ENCODE measurements at regions of chr5 and their contacts with region 1.

Region 1: DNA sequence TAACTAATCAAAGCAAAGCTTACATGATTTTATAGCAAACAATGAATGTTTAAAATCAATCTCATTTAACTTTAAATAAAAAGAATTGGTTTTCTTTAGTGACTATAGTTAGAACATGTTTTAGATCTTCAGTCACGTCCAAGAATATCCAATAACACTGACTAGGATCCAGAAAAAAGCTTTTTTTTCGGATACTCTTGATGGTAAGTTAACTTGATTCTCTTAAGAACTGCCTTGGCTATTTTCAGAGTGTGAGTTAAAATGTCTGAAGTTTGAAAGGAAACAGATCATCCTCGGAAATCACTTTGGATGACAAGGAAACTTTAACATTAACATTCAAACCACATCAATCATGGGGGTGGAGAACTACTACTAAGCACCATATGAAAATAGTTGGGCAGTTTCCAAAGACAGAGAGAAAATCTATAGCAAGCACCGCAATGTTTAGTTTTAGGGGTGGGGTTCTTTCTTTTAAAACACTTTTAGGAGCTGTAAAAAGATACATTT is 83.7 kb upstream of the SLC27A6 start:
- DNase-seq: no peak
- ATAC-seq: no peak
- H3K4me3 ChIP-seq: no peak overlapping the region
- H3K27ac ChIP-seq: no peak overlapping the region
- H3K4me1 ChIP-seq: peaks cover 0 to 10% (median 0%) of the 10 kb centered on the region in 9 donors
- H3K27me3 ChIP-seq: no peaks in the 10 kb centered on the region
- CTCF ChIP-seq: no peak

Region 2: DNA sequence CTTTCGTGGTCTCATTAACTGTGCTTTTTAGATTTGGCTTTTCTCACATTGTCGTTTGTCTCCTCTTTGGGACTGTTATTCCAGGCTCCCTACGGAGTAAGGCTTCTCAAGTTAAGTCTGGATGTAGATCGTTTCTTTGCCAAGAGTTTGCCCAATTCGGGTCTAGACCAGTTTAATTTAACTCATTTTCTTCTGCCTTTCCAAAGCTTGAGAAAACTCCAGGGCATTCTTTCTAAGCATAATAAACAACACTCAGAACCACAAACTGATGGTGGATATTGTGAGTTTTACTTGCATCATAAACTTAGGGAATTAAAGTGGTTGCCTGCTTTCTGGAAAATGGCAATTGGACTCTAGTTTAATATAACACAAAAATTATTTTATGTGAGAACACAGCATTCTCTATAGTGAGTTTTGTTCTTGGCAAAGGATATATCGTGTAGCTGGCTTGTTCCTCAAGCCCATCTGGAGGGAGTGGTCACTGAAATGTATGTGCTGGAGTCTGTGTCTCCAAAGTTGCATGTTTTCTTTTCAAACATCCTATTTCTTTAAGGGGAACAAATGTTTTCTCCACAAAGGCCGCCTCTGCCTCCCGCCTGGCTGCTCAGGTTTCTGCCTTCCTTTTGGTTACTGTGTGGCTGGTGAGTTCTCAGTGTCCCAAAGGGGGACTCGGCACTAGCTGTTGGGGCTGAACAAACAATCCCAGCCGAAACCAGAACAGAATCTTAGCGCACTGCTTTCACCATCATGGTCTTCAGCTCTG is 132.2 kb before region 1 on chr5:
- intact Hi-C with region 1: no loop called
- DNase-seq: no peak
- ATAC-seq: peak in 1 of 8 donors; percentile 46
- H3K4me3 ChIP-seq: no peak overlapping the region
- H3K27ac ChIP-seq: no peak overlapping the region
- H3K4me1 ChIP-seq: peaks cover 0 to 10% (median 0%) of the 10 kb centered on the region in 9 donors
- H3K27me3 ChIP-seq: peaks cover 0 to 4% (median 0%) of the 10 kb centered on the region in 7 donors
- CTCF ChIP-seq: no peak

Region 3: GRCh38 chr5:128870373-128870772 is 11.2 kb before region 1 on chr5:
- intact Hi-C with region 1: loop called in 1 of 10 experiments (anchors 1 kb)
- DNase-seq: no peak
- ATAC-seq: no peak
- H3K4me3 ChIP-seq: no peak overlapping the region
- H3K27ac ChIP-seq: no peak overlapping the region
- H3K4me1 ChIP-seq: no peaks in the 10 kb centered on the region
- H3K27me3 ChIP-seq: no peaks in the 10 kb centered on the region
- CTCF ChIP-seq: no peak

Region 4: GRCh38 chr5:128920345-128921215 is 39.0 kb after region 1 on chr5:
- intact Hi-C with region 1: no loop called
- DNase-seq: peak in 1 of 2 donors; percentile 61
- ATAC-seq: peak; percentile 81 to 96 (median 92)
- H3K4me3 ChIP-seq: no peak overlapping the region
- H3K27ac ChIP-seq: peak overlapping the region in 8 of 10 donors; percentile 11 to 75 (median 60)
- H3K4me1 ChIP-seq: peaks cover 0 to 5% (median 0%) of the 10 kb centered on the region in 9 donors
- H3K27me3 ChIP-seq: no peaks in the 10 kb centered on the region
- CTCF ChIP-seq: no peak

Region 5: DNA sequence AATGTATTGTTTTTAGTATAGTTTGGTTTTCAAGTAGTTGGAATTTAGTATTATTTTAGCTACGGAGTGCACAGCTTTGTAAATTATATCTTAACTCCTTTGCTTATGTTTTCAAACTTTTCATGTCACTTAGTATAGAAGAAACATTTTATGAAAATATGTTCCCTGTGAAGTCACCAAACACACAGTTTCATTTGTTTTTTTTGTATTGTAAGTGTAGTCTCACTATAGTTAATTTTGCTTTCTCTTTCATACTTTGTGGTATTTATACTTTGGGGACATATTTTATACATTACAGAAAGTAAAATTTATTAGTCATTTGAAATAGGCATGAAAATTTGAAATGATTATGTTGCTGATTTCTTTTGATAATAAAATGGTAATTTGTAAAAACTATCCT is 1027.7 kb after region 1 on chr5:
- intact Hi-C with region 1: no loop called
- DNase-seq: no peak
- ATAC-seq: no peak
- H3K4me3 ChIP-seq: no peak overlapping the region
- H3K27ac ChIP-seq: no peak overlapping the region
- H3K4me1 ChIP-seq: peaks cover 0 to 27% (median 19%) of the 10 kb centered on the region in 9 donors
- H3K27me3 ChIP-seq: peaks cover 0 to 43% (median 0%) of the 10 kb centered on the region in 7 donors
- CTCF ChIP-seq: no peak